ENCODE measurements at regions of chr20 and their contacts with region 1.

Region 1: DNA sequence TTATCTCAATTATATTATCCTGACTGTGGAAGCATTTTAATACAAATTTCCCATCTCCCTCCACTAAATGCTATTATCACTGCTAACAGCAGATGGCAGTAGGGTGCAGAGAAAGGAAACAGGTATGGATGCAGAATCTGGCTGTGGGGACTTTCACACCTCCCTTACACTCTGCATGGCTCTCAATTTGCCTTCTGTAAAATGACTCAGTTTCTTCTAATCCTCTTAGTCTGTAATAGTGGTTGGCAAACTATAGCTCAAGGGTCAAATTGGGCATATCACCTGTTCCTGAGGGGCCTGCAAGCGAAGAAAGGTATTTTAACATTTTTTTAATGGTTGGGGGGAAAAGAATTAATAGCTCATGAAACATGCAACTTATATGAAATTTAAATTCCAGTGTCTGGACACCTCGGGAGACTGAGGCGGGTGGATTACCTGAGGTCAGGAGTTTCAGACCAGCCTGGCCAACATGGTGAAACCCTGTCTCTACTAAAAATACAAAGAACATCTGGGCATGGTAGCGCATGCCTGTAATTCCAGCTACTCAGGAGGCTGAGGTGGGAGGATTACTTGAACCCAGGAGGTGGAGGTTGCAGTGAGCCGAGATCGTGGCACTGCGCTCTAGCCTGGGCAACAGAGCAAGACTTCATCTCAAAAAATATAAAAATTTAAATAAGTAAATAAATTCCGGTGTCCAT is 83.5 kb downstream of the ZMYND8 start:
- DNase-seq: no peak
- ATAC-seq: peak; percentile 76
- H3K4me3 Mint-ChIP-seq: no peak overlapping the region
- H3K27ac Mint-ChIP-seq: peak overlapping the region; percentile 60
- H3K4me1 Mint-ChIP-seq: peaks cover 36% of the 10 kb centered on the region
- H3K27me3 Mint-ChIP-seq: no peaks in the 10 kb centered on the region
- CTCF ChIP-seq: peak; percentile 34

Region 2: DNA sequence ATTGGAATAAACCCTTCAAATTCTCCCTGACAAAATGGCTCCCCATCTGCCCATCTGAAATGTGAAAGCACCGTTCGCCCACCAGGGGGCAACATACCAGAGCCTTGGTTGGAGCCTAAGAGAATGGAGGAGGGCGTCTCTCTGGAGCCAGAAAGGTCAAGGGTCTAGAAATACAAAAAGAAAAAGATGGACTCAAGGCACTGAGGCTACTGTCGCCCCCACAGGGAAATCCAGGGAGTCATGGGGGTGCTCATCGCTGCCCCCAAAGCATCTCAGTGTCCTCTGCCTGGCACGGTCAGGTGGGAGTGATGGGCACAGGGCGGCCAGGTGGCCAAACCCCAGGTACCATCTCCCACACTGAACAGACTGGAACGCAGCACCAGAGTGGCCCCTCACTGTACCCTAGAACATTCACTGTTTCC is 52.9 kb before region 1 on chr20:
- CTCF ChIA-PET with region 1: interaction called, 9 read pairs
- POLR2A ChIA-PET with region 1: no interaction called
- intact Hi-C with region 1: loop called (anchors 2 kb)
- DNase-seq: peak; percentile 27
- ATAC-seq: peak; percentile 42
- H3K4me3 Mint-ChIP-seq: no peak overlapping the region
- H3K27ac Mint-ChIP-seq: no peak overlapping the region
- H3K4me1 Mint-ChIP-seq: peaks cover 11% of the 10 kb centered on the region
- H3K27me3 Mint-ChIP-seq: no peaks in the 10 kb centered on the region
- CTCF ChIP-seq: no peak

Region 3: GRCh38 chr20:47296950-47297349 is 23.9 kb after region 1 on chr20:
- CTCF ChIA-PET with region 1: interaction called, 14 read pairs
- POLR2A ChIA-PET with region 1: no interaction called
- intact Hi-C with region 1: no loop called
- DNase-seq: no peak
- ATAC-seq: no peak
- H3K4me3 Mint-ChIP-seq: no peak overlapping the region
- H3K27ac Mint-ChIP-seq: no peak overlapping the region
- H3K4me1 Mint-ChIP-seq: no peaks in the 10 kb centered on the region
- H3K27me3 Mint-ChIP-seq: no peaks in the 10 kb centered on the region
- CTCF ChIP-seq: no peak

Region 4: GRCh38 chr20:47356526-47357295 is 83.7 kb after region 1 on chr20 and contains the start of gene ZMYND8:
- CTCF ChIA-PET with region 1: interaction called, 5 read pairs
- POLR2A ChIA-PET with region 1: interaction called, 10 read pairs
- intact Hi-C with region 1: no loop called
- DNase-seq: peak; percentile 96
- ATAC-seq: peak; percentile 81
- H3K4me3 Mint-ChIP-seq: no peak within 1 kb of the TSS
- H3K27ac Mint-ChIP-seq: no peak within 1 kb of the TSS
- H3K4me1 Mint-ChIP-seq: peaks cover 55% of the 10 kb centered on the region
- H3K27me3 Mint-ChIP-seq: no peaks in the 10 kb centered on the region
- CTCF ChIP-seq: no peak
- total RNA-seq, gene ZMYND8: 42.6 and 44.7 TPM in 2 replicates

Region 5: GRCh38 chr20:47561180-47561579 is 288.1 kb after region 1 on chr20:
- CTCF ChIA-PET with region 1: no interaction called
- POLR2A ChIA-PET with region 1: interaction called, 17 read pairs
- intact Hi-C with region 1: no loop called
- DNase-seq: no peak
- ATAC-seq: no peak
- H3K4me3 Mint-ChIP-seq: peak overlapping the region; percentile 46
- H3K27ac Mint-ChIP-seq: peak overlapping the region; percentile 2
- H3K4me1 Mint-ChIP-seq: peaks cover 95% of the 10 kb centered on the region
- H3K27me3 Mint-ChIP-seq: no peaks in the 10 kb centered on the region
- CTCF ChIP-seq: no peak

Measured in activated B cell treated with CpG ODN at 0.5 μM for 24 hours (primary cell).